Endothelial cell of umbilical vein (primary cell): ENCODE measurements at regions of chr17 and their contacts with region 1.

Region 1: GRCh38 chr17:2244545-2245525 is 58.8 kb downstream of the SMG6 start:
- DNase-seq: peak; percentile 97
- H3K4me3 ChIP-seq: no peak overlapping the region
- H3K27ac ChIP-seq: peak overlapping the region; percentile 86
- H3K4me1 ChIP-seq: peaks cover 22% of the 10 kb centered on the region
- H3K27me3 ChIP-seq: no peaks in the 10 kb centered on the region
- CTCF ChIP-seq: peak; percentile 91 to 95
- POLR2A ChIP-seq: no peak

Region 2: GRCh38 chr17:2054512-2055291 is 190.1 kb before region 1 on chr17 and contains the start of gene HIC1:
- CTCF ChIA-PET with region 1: interaction called, 455 read pairs
- POLR2A ChIA-PET with region 1: interaction called, 4 read pairs
- dilution Hi-C with region 1: no loop called
- intact Hi-C with region 1: loop called (anchors 1 kb)
- DNase-seq: peak; percentile 75
- H3K4me3 ChIP-seq: peak within 1 kb of the TSS; percentile 61 to 74 (median 72)
- H3K27ac ChIP-seq: peak within 1 kb of the TSS; percentile 64
- H3K4me1 ChIP-seq: peaks cover 20% of the 10 kb centered on the region
- H3K27me3 ChIP-seq: peaks cover 2 to 11% of the 10 kb centered on the region in 2 experiments
- CTCF ChIP-seq: peak; percentile 75 to 94
- POLR2A ChIP-seq: peak; percentile 70
- total RNA-seq, gene HIC1: 25.8 and 35.5 TPM in 2 replicates

Region 3: GRCh38 chr17:2087597-2088211 is 157.1 kb before region 1 on chr17:
- CTCF ChIA-PET with region 1: interaction called, 76 read pairs
- POLR2A ChIA-PET with region 1: no interaction called
- dilution Hi-C with region 1: no loop called
- intact Hi-C with region 1: loop called (anchors 1 kb)
- DNase-seq: peak; percentile 86
- H3K4me3 ChIP-seq: no peak overlapping the region
- H3K27ac ChIP-seq: peak overlapping the region; percentile 54
- H3K4me1 ChIP-seq: peaks cover 75% of the 10 kb centered on the region
- H3K27me3 ChIP-seq: no peaks in the 10 kb centered on the region
- CTCF ChIP-seq: no peak
- POLR2A ChIP-seq: no peak

Region 4: DNA sequence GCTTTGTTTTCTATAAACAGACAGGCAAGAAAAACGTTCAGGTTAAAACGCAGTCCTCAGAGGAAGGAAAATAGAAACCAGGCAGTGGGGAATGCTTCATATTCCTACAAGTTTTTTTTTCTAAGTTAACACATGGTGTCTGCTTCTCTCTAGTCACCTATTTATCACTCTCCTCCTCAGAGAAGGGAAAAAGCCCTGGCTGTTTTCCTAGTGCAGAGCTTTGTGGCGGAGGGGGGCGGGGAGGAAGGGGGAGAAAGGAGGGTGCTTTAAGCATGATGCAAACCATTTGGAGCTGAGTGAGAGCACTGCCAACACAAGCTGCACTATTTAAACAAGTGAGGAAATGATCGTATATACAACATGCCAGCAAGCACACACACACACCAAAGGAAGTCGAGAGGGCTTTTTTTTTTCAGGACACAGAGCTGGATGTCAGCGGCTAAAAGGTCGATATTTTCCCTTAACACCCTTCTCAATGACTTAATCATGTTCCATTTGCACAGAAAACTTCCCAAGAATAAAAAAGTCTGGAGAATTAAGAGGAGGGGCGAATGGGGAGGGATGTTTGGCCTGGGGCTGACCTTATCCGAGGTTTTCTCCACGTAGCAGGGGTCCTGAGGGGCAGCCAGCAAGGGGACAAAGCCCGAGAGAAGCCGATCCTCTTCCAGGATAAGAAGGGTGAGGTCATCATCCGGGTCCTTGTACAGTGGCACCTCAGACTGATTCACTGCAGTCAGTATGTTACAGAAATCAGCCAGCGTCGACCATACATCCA is 72.6 kb before region 1 on chr17:
- CTCF ChIA-PET with region 1: interaction called, 13 read pairs
- POLR2A ChIA-PET with region 1: no interaction called
- dilution Hi-C with region 1: no loop called
- intact Hi-C with region 1: loop called (anchors 1 kb)
- DNase-seq: peak; percentile 98
- H3K4me3 ChIP-seq: peak overlapping the region in 1 of 3 experiments; percentile 40
- H3K27ac ChIP-seq: peak overlapping the region; percentile 94
- H3K4me1 ChIP-seq: peaks cover 59% of the 10 kb centered on the region
- H3K27me3 ChIP-seq: no peaks in the 10 kb centered on the region
- CTCF ChIP-seq: no peak
- POLR2A ChIP-seq: peak; percentile 43

Region 5: DNA sequence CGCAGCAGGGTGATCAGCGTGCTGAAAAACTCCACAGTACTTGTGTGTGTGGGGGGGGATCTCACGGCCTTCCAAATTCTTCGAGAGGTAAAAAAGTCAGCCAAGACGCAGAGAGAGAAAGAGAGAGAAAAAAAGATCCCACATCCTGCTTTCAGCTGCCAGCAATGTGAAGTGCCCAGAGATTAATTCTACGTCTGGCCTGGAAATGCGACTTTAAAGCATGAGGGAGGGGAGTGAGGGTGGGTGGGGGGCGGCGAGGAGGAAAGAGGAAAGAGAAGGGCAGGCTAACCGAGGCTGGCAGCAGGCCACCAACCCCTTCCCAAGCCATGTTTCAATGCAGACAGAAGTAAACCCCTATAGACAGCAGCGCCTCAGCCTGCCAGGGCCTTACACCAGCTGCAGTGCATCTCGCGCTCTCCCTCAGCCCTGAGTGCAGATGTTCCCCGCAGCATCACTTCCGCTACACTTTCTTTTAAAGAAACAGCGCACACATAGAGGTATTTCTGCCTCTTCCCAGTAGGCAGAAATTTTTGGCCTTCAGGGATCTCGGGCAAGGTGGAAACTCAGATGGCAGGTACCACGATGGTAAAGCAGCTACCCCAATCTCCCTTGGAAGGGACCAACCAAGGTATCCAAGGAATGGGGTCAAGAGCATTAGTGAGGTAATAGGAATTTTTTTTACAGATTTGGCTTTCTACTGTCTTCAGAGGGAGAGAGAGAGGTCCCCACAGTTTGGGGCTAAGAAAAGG is 29.0 kb before region 1 on chr17:
- CTCF ChIA-PET with region 1: interaction called, 10 read pairs
- POLR2A ChIA-PET with region 1: no interaction called
- dilution Hi-C with region 1: no loop called
- intact Hi-C with region 1: no loop called
- DNase-seq: peak; percentile 84
- H3K4me3 ChIP-seq: no peak overlapping the region
- H3K27ac ChIP-seq: peak overlapping the region; percentile 81
- H3K4me1 ChIP-seq: peaks cover 46% of the 10 kb centered on the region
- H3K27me3 ChIP-seq: no peaks in the 10 kb centered on the region
- CTCF ChIP-seq: no peak
- POLR2A ChIP-seq: peak; percentile 54

Region 6: DNA sequence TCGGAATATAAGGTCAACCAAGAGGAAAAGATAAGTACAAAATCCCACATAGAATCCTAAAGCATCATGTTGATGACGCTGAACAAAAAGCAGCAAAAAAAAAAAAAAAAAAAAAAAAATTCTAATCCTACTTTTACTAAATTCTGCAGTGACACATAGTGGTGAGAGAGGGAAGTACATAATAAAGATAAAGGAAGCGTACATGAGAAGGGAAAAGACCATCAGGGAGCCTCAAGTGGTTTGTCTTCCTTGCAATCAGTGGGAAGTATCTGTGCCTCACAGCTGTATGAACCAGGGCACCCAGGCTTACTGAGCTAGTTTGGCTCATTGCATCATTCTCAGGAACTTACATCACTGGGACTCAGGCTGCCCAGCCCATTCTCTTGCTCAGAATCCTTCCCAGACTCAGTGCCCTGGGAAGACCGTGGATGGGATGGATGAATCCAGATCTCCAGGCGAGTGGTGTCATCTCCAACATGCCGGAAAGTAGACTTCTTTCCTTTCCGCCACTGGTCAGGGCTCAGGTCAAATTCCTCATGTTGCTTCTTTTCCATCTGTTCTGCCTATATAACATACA is 37.5 kb after region 1 on chr17:
- CTCF ChIA-PET with region 1: interaction called, 15 read pairs
- POLR2A ChIA-PET with region 1: no interaction called
- dilution Hi-C with region 1: no loop called
- intact Hi-C with region 1: no loop called
- DNase-seq: peak; percentile 71
- H3K4me3 ChIP-seq: no peak overlapping the region
- H3K27ac ChIP-seq: no peak overlapping the region
- H3K4me1 ChIP-seq: no peaks in the 10 kb centered on the region
- H3K27me3 ChIP-seq: no peaks in the 10 kb centered on the region
- CTCF ChIP-seq: peak; percentile 25 to 46
- POLR2A ChIP-seq: no peak